CD4-positive, alpha-beta memory T cell (primary cell): ENCODE measurements at regions of chr13 and their contacts with region 1.

Region 1: GRCh38 chr13:32255724-32256109 is 59.4 kb downstream of the ZAR1L start:
- DNase-seq: no peak
- H3K4me3 ChIP-seq: no peak overlapping the region
- H3K4me3 Mint-ChIP-seq: no peak overlapping the region
- H3K27ac ChIP-seq: no peak overlapping the region
- H3K27ac Mint-ChIP-seq: no peak overlapping the region
- H3K4me1 ChIP-seq: no peaks in the 10 kb centered on the region
- H3K4me1 Mint-ChIP-seq: peaks cover 0 to 4% (median under 1%) of the 10 kb centered on the region in 4 donors
- H3K27me3 ChIP-seq: no peaks in the 10 kb centered on the region
- H3K27me3 Mint-ChIP-seq: no peaks in the 10 kb centered on the region

Region 2: GRCh38 chr13:32164622-32165268 is 91.0 kb before region 1 on chr13:
- CTCF ChIA-PET with region 1: no interaction called
- POLR2A ChIA-PET with region 1: no interaction called
- intact Hi-C with region 1: no loop called
- DNase-seq: peak; percentile 21 to 30 (median 25)
- H3K4me3 ChIP-seq: no peak overlapping the region
- H3K4me3 Mint-ChIP-seq: no peak overlapping the region
- H3K27ac ChIP-seq: no peak overlapping the region
- H3K27ac Mint-ChIP-seq: no peak overlapping the region
- H3K4me1 ChIP-seq: no peaks in the 10 kb centered on the region
- H3K4me1 Mint-ChIP-seq: peaks cover 0 to 5% (median 1%) of the 10 kb centered on the region in 4 donors
- H3K27me3 ChIP-seq: no peaks in the 10 kb centered on the region
- H3K27me3 Mint-ChIP-seq: no peaks in the 10 kb centered on the region

Region 3: DNA sequence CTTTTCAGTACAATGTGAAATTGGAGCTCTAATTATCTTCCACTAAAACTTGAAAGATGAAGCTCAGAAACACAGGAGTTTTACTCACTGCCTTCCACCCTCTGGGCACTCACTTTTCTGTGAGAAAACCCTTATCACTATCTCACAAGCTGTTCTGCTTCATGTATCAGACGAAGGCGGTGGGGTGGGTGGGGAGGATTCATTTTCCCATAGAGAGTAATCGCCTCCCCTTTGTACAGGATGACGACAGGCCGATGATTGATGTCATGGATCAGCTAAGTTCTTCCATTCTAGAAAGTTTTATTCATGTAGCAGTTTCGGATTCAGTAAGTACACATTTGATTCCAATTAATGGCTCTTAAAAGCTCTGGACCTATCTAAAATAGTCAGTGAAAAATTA is 80.4 kb before region 1 on chr13:
- CTCF ChIA-PET with region 1: no interaction called
- POLR2A ChIA-PET with region 1: no interaction called
- intact Hi-C with region 1: no loop called
- DNase-seq: no peak
- H3K4me3 ChIP-seq: no peak overlapping the region
- H3K4me3 Mint-ChIP-seq: no peak overlapping the region
- H3K27ac ChIP-seq: no peak overlapping the region
- H3K27ac Mint-ChIP-seq: no peak overlapping the region
- H3K4me1 ChIP-seq: no peaks in the 10 kb centered on the region
- H3K4me1 Mint-ChIP-seq: no peaks in the 10 kb centered on the region
- H3K27me3 ChIP-seq: no peaks in the 10 kb centered on the region
- H3K27me3 Mint-ChIP-seq: no peaks in the 10 kb centered on the region

Region 4: DNA sequence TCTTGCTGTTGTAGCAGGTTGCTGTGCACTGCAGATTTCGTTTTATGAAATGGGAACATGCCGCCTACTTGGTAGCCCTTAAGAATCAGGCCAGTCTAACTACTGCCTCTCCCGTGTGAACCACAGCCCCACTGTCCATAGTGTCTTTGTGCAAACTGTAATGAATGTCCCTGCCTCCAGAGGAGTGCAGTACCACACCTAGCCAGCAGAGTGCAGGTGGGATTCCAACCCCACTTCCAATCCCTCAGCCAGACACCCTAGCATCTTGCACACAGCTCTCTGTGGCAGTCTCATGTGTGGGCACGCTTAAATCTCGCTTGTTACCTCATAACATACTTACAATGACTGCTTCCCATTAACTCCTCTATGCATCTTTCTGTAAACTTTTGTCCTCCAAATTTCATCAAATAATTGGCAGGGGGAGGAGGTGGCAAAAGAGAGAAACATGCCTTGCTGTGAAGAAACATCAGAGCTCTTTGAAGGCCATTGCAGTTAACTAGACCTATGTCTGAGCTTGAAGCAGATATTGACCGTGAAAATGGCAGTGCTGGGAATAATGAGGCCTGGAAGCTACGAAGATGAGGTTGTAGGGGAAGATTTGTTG is 12.2 kb after region 1 on chr13:
- CTCF ChIA-PET with region 1: interaction called, 14 read pairs
- POLR2A ChIA-PET with region 1: no interaction called
- intact Hi-C with region 1: no loop called
- DNase-seq: peak; percentile 26 to 41 (median 40)
- H3K4me3 ChIP-seq: no peak overlapping the region
- H3K4me3 Mint-ChIP-seq: peak overlapping the region in 1 of 8 donors; percentile 55
- H3K27ac ChIP-seq: no peak overlapping the region
- H3K27ac Mint-ChIP-seq: peak overlapping the region in 1 of 7 donors; percentile 61
- H3K4me1 ChIP-seq: no peaks in the 10 kb centered on the region
- H3K4me1 Mint-ChIP-seq: peaks cover 0 to 4% (median 0%) of the 10 kb centered on the region in 4 donors
- H3K27me3 ChIP-seq: no peaks in the 10 kb centered on the region
- H3K27me3 Mint-ChIP-seq: no peaks in the 10 kb centered on the region